HepG2 (cell line): ENCODE measurements at regions of chr14 and their contacts with region 1.

Region 1: DNA sequence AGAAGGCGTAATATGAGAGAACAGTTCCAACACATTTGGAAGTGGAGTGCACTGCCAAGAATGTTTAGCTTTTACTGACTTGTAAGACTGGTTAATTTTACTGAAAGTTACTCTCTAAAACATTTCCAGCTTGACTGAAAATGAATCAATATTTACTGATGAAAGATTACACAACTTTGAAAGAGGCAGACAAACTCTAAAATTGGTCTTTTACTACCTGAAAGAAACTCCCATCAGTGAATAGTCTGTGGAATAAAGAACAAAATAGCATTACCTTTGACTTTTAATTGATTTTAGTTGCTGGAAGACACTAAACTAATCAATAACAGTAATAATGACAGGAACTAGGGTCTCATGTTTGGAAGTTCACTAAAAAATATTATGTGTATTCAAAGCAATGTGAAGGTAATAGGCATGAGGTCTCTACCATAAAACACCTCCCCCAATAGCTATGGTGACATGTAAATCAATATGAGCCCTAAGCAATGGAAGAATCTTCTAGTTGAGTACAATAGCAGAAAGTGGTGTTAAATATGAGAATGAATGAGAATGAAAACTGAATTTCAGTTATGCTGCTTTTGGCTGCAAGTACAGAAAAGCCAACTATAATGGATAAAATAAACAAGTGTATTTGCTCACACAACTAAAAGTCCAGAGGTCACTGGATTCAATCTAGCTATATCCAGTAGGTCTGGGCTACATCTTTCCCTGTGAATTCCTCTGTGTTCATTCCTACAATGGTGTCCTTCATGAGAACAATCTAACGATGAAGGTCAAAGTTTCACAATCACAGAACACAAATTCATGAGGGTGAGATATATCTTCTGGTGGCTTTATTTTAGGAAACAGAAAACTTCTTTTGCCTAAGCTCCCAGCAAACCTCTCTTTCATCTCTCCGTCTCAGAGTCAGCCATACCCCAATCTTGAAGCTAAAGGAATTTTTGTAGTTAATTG is 728.1 kb downstream of the FSCB start:
- DNase-seq: peak; percentile 99
- ATAC-seq: peak; percentile 91
- H3K4me3 ChIP-seq: peak overlapping the region in 2 of 3 experiments; percentile 43 to 56; a peak in 3 of 6 replicates
- H3K27ac ChIP-seq: peak overlapping the region; percentile 99
- H3K4me1 ChIP-seq: peaks cover 69% of the 10 kb centered on the region
- H3K27me3 ChIP-seq: no peaks in the 10 kb centered on the region
- CTCF ChIP-seq: no peak
- EP300 ChIP-seq: peak; percentile 65 to 92; a peak in 3 of 4 replicates
- POLR2A ChIP-seq: peak in 1 of 2 experiments; percentile 46; a peak in 1 of 4 replicates
- RAD21 ChIP-seq: peak; percentile 32; the same call in 1 of the 2 replicates

Region 2: GRCh38 chr14:43900173-43900655 is 121.3 kb after region 1 on chr14:
- CTCF ChIA-PET with region 1: no interaction called
- POLR2A ChIA-PET with region 1: interaction called, 3 read pairs
- in situ Hi-C with region 1: loop called (anchors 10 kb)
- intact Hi-C with region 1: loop called (anchors 1 kb)
- DNase-seq: peak; percentile 92
- ATAC-seq: peak; percentile 95
- H3K4me3 ChIP-seq: peak overlapping the region in 2 of 3 experiments; percentile 5 to 7; a peak in 1 of 6 replicates
- H3K27ac ChIP-seq: peak overlapping the region; percentile 86
- H3K4me1 ChIP-seq: peaks cover 75% of the 10 kb centered on the region
- H3K27me3 ChIP-seq: no peaks in the 10 kb centered on the region
- CTCF ChIP-seq: no peak
- EP300 ChIP-seq: peak in 1 of 2 experiments; percentile 79; a peak in 2 of 4 replicates
- POLR2A ChIP-seq: no peak
- RAD21 ChIP-seq: no peak